A549 (cell line): ENCODE measurements at regions of chr17 and their contacts with region 1.

Region 1: DNA sequence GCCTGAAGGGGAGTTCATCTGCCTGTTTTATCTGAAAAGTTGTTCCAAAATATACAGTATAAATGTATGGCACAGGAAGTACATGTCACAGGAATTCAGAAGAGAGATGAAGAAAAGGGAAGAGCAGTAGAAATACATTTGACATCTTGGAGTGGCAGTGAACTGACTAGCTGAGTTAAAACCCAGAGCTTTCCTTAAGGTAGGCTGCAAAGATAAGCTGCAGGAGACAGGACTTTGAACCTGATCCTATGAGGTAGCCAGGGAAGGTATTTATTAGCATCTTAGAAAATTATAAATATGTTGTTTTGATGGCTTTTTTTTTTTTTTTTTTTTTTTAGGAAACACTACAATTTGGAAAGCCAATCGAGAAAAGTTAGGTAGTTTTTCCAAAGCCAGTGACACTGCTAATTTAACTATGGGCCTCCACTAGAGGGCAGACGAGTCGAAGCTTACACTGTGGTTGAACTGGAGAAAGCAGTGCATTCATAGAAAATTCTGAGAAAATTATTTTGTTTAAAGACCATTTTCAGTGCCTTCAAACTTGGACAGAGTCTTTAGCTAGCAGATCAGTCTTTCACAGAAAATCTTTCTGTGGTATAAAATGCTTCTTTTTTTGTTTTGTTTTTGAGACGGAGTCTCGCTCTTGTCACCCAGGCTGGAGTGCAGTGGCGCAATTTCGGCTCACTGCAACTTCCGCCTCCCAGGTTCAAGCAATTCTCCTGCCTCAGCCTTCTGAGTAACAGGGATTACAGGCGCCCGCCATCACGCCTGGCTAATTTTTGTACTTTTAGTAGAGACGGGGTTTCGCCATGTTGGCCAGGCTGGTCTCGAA is 122.3 kb downstream of the SSH2 start:
- DNase-seq: peak; percentile 72 to 73
- ATAC-seq: peak; percentile 90 to 94
- H3K4me3 ChIP-seq: peak overlapping the region; percentile 47
- H3K27ac ChIP-seq: peak overlapping the region; percentile 62 to 78
- H3K4me1 ChIP-seq: no peaks in the 10 kb centered on the region
- CTCF ChIP-seq: peak; percentile 99
- EP300 ChIP-seq: no peak
- POLR2A ChIP-seq: no peak
- RAD21 ChIP-seq: peak; percentile 92 to 93

Region 2: DNA sequence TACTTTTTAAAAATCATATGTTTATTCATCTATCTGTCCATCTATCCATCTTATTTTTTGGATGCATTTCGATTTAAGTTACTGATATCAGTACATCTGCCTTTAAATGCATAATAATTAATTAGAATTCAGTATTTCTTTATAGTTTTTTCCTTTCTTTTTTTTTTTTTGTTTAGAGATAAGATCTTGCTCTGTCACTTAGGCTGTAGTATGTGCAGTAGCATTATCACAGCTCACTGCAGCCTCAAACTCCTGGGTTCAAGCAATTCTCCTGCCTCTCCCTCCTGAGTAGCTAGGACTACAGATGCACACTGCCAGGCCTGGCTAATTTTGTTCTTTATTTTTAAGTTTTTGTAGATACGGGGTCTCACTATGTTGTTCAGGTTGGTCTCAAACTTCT is 11.1 kb before region 1 on chr17:
- CTCF ChIA-PET with region 1: interaction called, 23 read pairs
- POLR2A ChIA-PET with region 1: no interaction called
- DNase-seq: no peak
- ATAC-seq: no peak
- H3K4me3 ChIP-seq: no peak overlapping the region
- H3K27ac ChIP-seq: no peak overlapping the region
- H3K4me1 ChIP-seq: no peaks in the 10 kb centered on the region
- CTCF ChIP-seq: no peak
- EP300 ChIP-seq: no peak
- POLR2A ChIP-seq: no peak
- RAD21 ChIP-seq: no peak

Region 3: DNA sequence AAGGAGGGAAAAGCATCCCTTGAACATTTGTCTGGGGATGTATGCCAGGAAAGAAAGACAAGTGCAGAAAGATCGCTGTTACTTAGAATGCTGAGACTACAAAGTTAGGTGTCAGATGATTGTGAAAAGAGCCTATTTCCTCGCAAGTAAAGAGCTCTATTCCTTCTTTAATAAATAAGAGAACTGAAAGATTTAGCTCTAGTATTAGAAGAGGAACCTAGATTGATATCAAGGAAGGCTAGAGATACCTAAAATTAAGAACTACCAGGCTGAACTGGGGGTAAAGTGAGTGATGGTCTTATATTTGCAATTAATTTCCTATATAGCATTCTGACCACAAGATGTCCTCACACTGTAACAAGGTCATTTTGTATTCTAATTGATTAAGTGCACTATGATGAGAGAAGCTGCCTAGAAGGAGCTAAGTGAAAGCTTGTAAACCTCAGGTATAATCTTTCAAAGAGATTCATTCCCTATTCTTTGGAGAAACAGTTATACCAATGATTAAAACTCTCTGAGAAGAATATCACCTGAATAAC is 60.0 kb after region 1 on chr17:
- CTCF ChIA-PET with region 1: interaction called, 21 read pairs
- POLR2A ChIA-PET with region 1: no interaction called
- DNase-seq: no peak
- ATAC-seq: peak; percentile 34 to 50; a peak in 1 of 6 replicates
- H3K4me3 ChIP-seq: no peak overlapping the region
- H3K27ac ChIP-seq: no peak overlapping the region
- H3K4me1 ChIP-seq: no peaks in the 10 kb centered on the region
- CTCF ChIP-seq: peak; percentile 48
- EP300 ChIP-seq: no peak
- POLR2A ChIP-seq: no peak
- RAD21 ChIP-seq: peak; percentile 31 to 41; a peak in 2 of 5 replicates

Region 4: GRCh38 chr17:29918922-29919856 is 111.5 kb after region 1 on chr17:
- CTCF ChIA-PET with region 1: interaction called, 14 read pairs
- POLR2A ChIA-PET with region 1: no interaction called
- DNase-seq: no peak
- ATAC-seq: peak; percentile 54 to 61; a peak in 4 of 6 replicates
- H3K4me3 ChIP-seq: no peak overlapping the region
- H3K27ac ChIP-seq: peak overlapping the region in 1 of 2 experiments; percentile 25; a peak in 2 of 6 replicates
- H3K4me1 ChIP-seq: peaks cover 11% of the 10 kb centered on the region
- CTCF ChIP-seq: no peak
- EP300 ChIP-seq: no peak
- POLR2A ChIP-seq: no peak
- RAD21 ChIP-seq: no peak

Region 5: DNA sequence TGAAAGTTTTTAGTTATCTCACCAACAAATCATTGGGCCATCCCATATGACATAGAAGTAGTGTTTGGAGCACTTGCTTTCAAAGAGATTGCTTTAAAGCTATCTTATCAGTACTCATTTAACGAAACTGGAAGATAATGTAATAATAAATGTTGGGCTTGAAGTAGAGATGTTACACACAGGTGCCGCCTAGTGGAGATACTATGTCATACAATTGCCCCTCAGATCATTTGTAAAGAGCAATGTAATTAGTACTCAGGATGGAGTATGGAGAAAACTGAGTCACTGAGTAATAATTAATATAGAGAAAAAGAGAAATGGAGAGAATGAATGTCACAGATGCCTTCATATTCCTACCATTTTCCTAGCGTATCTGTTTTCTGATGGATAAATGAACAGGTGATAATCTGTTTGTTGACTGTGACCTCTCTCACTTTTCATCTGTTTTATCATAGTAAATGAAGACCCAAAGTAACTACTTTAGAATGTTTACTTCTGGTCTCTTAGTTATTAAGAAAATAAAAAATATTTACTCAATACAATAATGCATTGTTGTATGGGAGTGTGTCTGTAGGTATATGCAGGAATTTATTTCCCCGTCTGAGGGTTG is 214.1 kb after region 1 on chr17:
- CTCF ChIA-PET with region 1: interaction called, 27 read pairs
- POLR2A ChIA-PET with region 1: no interaction called
- DNase-seq: peak; percentile 65 to 70
- ATAC-seq: peak; percentile 73; a peak in 4 of 6 replicates
- H3K4me3 ChIP-seq: no peak overlapping the region
- H3K27ac ChIP-seq: no peak overlapping the region
- H3K4me1 ChIP-seq: no peaks in the 10 kb centered on the region
- CTCF ChIP-seq: peak; percentile 97
- EP300 ChIP-seq: no peak
- POLR2A ChIP-seq: no peak
- RAD21 ChIP-seq: peak; percentile 85 to 86